MCF 10A (cell line): ENCODE measurements at regions of chr1 and their contacts with region 1.

Region 1: GRCh38 chr1:33080885-33081553 is at the start of gene AZIN2:
- DNase-seq: peak; percentile 94
- H3K4me3 Mint-ChIP-seq: peak within 1 kb of the TSS; percentile 75
- H3K27ac Mint-ChIP-seq: peak within 1 kb of the TSS; percentile 59
- H3K4me1 Mint-ChIP-seq: peaks cover 20% of the 10 kb centered on the region
- H3K27me3 Mint-ChIP-seq: no peaks in the 10 kb centered on the region
- CTCF ChIP-seq: no peak
- total RNA-seq, gene AZIN2: 1.6 and 4.3 TPM in 2 replicates

Region 2: DNA sequence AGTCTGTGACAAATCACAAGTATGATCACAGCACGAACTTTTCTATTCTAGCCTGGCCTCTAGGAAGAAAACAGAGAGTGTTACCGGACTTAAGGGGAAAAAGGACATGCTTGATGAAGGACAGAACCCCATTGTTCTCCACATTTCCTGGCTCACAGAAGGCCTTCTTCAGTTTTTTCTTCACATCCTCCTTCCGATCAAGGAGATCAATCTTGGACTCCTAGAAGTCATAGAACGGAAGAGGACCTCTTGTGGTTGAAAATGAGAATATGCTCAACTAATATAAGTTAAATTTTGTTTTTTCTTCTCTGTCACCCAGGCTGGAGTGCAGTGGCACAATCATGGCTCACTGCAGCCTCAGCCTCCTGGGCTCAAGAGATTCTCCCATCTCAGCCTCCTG is 294.2 kb before region 1 on chr1:
- CTCF ChIA-PET with region 1: no interaction called
- POLR2A ChIA-PET with region 1: no interaction called
- intact Hi-C with region 1: loop called (anchors 10 kb)
- DNase-seq: no peak
- H3K4me3 Mint-ChIP-seq: no peak overlapping the region
- H3K27ac Mint-ChIP-seq: no peak overlapping the region
- H3K4me1 Mint-ChIP-seq: peaks cover 2% of the 10 kb centered on the region
- H3K27me3 Mint-ChIP-seq: no peaks in the 10 kb centered on the region
- CTCF ChIP-seq: no peak

Region 3: GRCh38 chr1:33420870-33421775 is 340.1 kb after region 1 on chr1:
- CTCF ChIA-PET with region 1: no interaction called
- POLR2A ChIA-PET with region 1: no interaction called
- intact Hi-C with region 1: no loop called
- DNase-seq: no peak
- H3K4me3 Mint-ChIP-seq: no peak overlapping the region
- H3K27ac Mint-ChIP-seq: no peak overlapping the region
- H3K4me1 Mint-ChIP-seq: peaks cover 7% of the 10 kb centered on the region
- H3K27me3 Mint-ChIP-seq: no peaks in the 10 kb centered on the region
- CTCF ChIP-seq: no peak